ENCODE measurements at regions of chr10 and their contacts with region 1.

Region 1: DNA sequence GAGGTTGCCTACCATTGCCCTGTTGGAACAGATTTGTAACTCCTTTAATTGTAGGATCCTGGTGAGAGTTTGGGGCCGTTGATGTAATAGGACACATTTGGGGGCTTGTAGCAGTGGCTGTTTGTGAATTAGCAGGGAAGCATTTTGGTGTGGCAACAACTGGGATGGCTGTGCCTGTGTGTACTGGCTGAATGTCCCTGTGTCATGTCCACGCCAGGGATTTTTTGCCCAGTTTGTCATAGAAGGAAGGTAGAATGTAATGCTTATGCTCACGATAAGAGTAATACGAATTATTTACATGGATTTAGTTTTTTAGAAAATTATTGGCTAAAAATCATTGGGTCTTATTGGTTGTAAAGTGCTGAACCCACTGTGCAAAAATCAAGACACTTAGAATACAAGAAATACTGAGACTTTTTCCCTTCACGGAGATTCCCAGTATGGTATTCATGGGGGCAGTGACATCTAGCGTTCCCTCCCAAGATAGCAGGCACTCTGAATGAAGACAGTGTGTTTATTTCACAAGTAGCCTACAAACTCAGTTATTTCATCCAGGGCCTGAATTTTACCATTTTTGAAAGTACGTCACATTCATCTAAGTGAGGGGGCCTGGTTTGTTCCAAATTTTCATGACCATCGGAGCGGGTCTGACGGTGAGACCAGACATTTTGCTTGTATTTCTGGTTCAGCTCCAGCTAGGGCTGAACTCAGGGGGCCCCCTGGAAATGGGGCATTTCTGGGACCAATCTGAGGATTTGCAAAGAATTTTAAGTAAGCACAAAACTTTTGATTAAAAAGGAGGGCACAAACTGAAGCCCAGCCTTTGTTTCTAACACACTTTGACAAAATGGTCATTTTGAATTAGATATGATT is 74.7 kb downstream of the CACNB2 start:
- DNase-seq: no peak
- H3K4me3 ChIP-seq: no peak overlapping the region
- H3K27me3 ChIP-seq: 0 out of 2 replicates have a peak, but pooled peaks cover 1% of the 10 kb centered on the region
- CTCF ChIP-seq: peak; percentile 87

Region 2: GRCh38 chr10:17847585-17848296 is 367.2 kb before region 1 on chr10:
- CTCF ChIA-PET with region 1: interaction called, 16 read pairs
- POLR2A ChIA-PET with region 1: no interaction called
- DNase-seq: no peak
- H3K4me3 ChIP-seq: no peak overlapping the region
- H3K27me3 ChIP-seq: no peaks in the 10 kb centered on the region
- CTCF ChIP-seq: peak; percentile 37

Region 3: DNA sequence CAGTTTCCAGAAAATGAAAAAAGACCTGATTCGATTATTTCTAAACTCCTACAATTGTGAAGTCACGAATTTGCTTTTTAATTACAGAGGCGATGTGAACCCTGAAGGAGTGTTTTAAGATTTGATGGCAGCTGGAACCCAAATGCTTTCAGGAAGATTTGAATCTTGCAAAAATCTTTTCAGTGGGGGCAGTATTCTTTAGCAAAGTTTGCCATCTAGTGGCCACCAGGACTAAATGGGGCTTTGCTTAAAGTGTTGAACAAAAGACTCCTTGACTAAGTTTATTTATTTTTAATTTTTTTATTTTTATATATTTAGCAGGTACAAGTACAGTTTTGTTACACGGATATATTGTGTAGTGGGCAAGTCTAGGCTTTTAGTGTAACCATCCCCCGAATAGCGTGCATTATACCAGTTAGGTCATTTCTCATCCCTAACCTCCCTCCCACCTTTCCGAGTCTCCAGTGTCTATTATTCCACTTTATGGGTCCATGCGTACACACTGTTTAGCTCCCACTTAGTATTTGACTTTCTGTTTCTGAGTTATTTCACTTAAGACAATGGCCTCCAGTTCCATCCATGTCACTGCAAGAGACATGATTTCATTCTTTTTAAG is 24.1 kb after region 1 on chr10:
- CTCF ChIA-PET with region 1: interaction called, 10 read pairs
- POLR2A ChIA-PET with region 1: no interaction called
- DNase-seq: no peak
- H3K4me3 ChIP-seq: no peak overlapping the region
- H3K27me3 ChIP-seq: no peaks in the 10 kb centered on the region
- CTCF ChIP-seq: peak; percentile 76